Colonic mucosa (tissue), 4 donors: ENCODE measurements at regions of chr2 and their contacts with region 1.

Region 1: DNA sequence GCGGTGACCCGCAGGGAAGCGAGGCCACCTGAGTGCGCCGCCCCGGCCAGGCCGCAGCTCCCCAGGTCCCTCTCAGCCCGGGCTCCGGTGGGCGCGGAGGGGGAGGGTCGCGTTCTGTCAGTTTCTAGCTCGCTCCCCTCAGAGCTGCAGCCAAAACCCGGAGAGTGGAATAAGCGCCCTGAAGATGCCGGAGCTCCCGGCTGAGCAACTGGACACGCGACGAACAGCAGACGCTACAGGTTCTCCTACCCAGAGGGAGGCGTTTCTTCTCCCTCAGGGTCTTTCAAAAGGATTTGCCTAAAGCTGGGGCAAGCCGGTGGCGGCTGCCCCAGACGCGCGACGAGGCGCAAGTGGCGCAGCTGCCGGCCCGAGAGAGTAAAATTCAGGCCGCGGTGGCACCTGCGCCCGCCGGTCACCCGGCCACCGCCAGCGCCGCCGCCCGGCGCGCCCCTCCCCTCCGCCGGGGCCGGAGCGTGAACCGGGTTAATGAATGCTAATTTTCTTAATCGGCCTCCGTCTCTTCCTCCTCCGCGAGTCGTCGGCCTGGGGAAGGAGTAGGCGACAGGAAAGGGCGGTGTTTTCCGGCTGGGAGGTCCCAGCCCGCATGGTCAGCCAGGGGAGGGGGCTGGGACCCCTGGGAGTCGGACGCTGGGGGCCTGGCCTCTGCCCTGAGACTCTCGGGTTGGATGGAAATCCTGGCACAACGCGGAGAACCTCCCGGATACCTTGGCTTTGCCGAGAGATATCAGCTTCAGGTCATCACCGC is 845 bp upstream of the CDC42EP3 start:
- DNase-seq: peak; percentile 81
- H3K4me3 ChIP-seq: peak overlapping the region; percentile 85
- H3K27ac ChIP-seq: peak overlapping the region; percentile 92
- H3K4me1 ChIP-seq: peaks cover 6% of the 10 kb centered on the region
- H3K27me3 ChIP-seq: no peaks in the 10 kb centered on the region
- CTCF ChIP-seq: no peak

Region 2: GRCh38 chr2:37585982-37586621 is 86.2 kb before region 1 on chr2:
- intact Hi-C with region 1: loop called (anchors 5 kb)
- DNase-seq: peak; percentile 44
- H3K4me3 ChIP-seq: no peak overlapping the region
- H3K27ac ChIP-seq: peak overlapping the region; percentile 79
- H3K4me1 ChIP-seq: peaks cover 9% of the 10 kb centered on the region
- H3K27me3 ChIP-seq: no peaks in the 10 kb centered on the region
- CTCF ChIP-seq: no peak